Calu3 (cell line): ENCODE measurements at regions of chr1 and their contacts with region 1.

Region 1: DNA sequence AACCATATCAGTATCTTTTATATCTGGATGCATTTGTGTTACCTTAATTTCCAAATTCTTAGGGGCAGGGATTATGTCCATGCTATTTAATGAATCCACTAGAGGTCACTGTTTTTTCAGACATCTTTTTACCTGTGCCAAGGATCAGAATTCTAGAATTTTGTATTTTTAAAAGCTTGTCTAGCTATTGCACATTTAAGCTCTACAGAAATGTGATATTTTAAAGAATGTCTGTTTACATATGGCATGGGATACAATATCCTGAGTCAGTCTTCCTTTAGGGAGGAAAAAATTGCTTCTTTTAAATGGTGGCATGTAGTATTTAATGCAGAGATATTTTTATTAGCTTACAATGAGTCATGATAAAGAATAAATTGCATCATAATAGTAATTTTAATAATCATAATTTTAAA is 11.3 kb downstream of the RPAP2 start:
- DNase-seq: no peak
- H3K4me3 Mint-ChIP-seq: no peak overlapping the region
- H3K27ac Mint-ChIP-seq: no peak overlapping the region
- H3K4me1 Mint-ChIP-seq: no peaks in the 10 kb centered on the region
- H3K27me3 Mint-ChIP-seq: no peaks in the 10 kb centered on the region
- CTCF ChIP-seq: no peak

Region 2: DNA sequence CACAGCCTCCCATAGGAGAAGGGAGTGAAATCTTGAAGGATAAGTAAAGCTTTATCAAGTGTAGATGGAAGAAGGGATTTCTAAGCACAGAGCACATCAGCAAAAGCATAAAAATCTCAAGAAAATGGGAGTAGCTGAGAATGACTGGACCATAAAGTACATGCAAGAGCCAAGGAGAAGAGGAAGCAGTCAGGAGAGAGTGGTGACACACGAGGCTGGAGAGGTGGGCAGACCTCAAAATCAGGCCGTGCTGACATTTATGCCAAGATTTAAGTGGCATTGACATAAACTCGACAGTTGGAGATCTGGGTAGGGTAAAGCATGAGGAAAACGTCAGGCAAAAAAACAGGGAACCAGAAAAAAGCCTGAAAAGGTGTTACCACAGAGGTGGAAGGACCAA is 114.2 kb after region 1 on chr1:
- CTCF ChIA-PET with region 1: no interaction called
- intact Hi-C with region 1: no loop called
- DNase-seq: no peak
- H3K4me3 Mint-ChIP-seq: no peak overlapping the region
- H3K27ac Mint-ChIP-seq: no peak overlapping the region
- H3K4me1 Mint-ChIP-seq: no peaks in the 10 kb centered on the region
- H3K27me3 Mint-ChIP-seq: no peaks in the 10 kb centered on the region
- CTCF ChIP-seq: no peak

Region 3: DNA sequence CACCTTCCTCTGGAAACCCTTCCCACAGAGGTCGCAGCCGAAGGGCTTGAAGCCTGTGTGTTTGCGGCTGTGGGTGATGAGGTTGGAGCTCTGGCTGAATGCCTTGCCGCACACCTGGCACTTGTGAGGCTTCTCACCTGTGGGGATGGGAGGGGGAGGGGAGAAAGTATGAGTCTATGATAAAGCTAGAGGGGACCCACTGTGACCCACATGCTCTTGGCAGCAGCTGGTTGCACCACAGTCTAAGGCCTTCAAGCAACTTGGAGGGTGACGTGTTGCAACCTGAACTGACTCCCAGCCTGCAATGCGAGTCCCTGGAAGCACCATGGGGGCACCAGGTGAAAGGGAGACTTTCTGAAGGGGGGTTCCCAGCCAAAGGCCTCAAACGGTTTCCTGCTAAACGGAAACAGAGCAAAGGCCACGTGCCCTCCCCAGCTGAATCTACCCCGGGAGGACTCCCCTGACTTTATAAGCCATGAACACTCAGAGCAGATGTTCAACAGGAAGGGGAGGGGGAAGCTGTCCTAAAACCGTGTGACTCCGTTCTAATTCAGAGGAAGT is 166.0 kb after region 1 on chr1:
- CTCF ChIA-PET with region 1: no interaction called
- intact Hi-C with region 1: loop called (anchors 10 kb)
- DNase-seq: no peak
- H3K4me3 Mint-ChIP-seq: no peak overlapping the region
- H3K27ac Mint-ChIP-seq: no peak overlapping the region
- H3K4me1 Mint-ChIP-seq: peaks cover 5% of the 10 kb centered on the region
- H3K27me3 Mint-ChIP-seq: peaks cover 81% of the 10 kb centered on the region
- CTCF ChIP-seq: no peak

Region 4: GRCh38 chr1:92599184-92599583 is 289.0 kb after region 1 on chr1:
- CTCF ChIA-PET with region 1: interaction called, 3 read pairs
- intact Hi-C with region 1: loop called (anchors 2 kb)
- DNase-seq: no peak
- H3K4me3 Mint-ChIP-seq: no peak overlapping the region
- H3K27ac Mint-ChIP-seq: no peak overlapping the region
- H3K4me1 Mint-ChIP-seq: no peaks in the 10 kb centered on the region
- H3K27me3 Mint-ChIP-seq: no peaks in the 10 kb centered on the region
- CTCF ChIP-seq: no peak

Region 5: GRCh38 chr1:92623187-92623778 is 313.1 kb after region 1 on chr1:
- CTCF ChIA-PET with region 1: interaction called, 4 read pairs
- intact Hi-C with region 1: loop called (anchors 2 kb)
- DNase-seq: no peak
- H3K4me3 Mint-ChIP-seq: no peak overlapping the region
- H3K27ac Mint-ChIP-seq: no peak overlapping the region
- H3K4me1 Mint-ChIP-seq: no peaks in the 10 kb centered on the region
- H3K27me3 Mint-ChIP-seq: no peaks in the 10 kb centered on the region
- CTCF ChIP-seq: no peak